ENCODE measurements at regions of chr20 and their contacts with region 1.

Region 1: DNA sequence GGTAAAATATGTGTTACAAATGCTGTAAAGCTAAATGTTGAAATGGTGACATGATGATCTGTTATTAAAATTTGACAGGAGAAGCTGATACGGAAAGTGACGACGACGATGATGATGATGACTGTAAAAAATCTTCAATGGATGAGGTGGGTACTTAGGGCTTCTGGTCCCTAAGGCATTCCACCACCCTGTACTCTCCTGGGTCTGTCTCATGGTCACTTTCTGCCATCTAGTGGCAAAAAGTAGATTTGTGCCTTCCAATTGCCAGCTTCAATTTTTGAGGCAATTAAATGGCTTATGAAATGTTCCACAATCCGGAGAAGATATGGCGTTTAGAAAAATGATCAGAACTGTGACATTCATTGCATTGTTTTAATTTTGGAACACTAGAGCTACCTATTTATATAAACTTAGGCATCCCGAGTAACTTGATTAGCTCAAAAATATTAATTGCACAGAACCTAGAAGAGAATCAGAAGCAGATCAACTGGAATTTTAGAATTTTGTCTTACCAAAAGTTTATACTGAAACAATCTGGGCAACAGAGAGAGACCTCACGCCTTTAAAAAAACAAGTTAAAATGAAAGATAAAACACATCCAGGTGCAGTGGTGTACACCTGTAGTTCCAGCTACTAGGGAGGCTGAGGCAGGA is 346.5 kb upstream of the PLCB4 start:
- DNase-seq: peak in 14 of 35 experiments; percentile 1 to 69 (median 9)
- ATAC-seq: peak in 2 of 4 experiments; percentile 48 to 57
- H3K4me3 ChIP-seq: no peak overlapping the region
- H3K4me3 Mint-ChIP-seq: no peak overlapping the region
- H3K27ac ChIP-seq: no peak overlapping the region
- H3K27ac Mint-ChIP-seq: no peak overlapping the region
- H3K4me1 ChIP-seq: no peaks in the 10 kb centered on the region
- H3K4me1 Mint-ChIP-seq: no peaks in the 10 kb centered on the region
- H3K27me3 ChIP-seq: no peaks in the 10 kb centered on the region
- H3K27me3 Mint-ChIP-seq: no peaks in the 10 kb centered on the region

Region 2: DNA sequence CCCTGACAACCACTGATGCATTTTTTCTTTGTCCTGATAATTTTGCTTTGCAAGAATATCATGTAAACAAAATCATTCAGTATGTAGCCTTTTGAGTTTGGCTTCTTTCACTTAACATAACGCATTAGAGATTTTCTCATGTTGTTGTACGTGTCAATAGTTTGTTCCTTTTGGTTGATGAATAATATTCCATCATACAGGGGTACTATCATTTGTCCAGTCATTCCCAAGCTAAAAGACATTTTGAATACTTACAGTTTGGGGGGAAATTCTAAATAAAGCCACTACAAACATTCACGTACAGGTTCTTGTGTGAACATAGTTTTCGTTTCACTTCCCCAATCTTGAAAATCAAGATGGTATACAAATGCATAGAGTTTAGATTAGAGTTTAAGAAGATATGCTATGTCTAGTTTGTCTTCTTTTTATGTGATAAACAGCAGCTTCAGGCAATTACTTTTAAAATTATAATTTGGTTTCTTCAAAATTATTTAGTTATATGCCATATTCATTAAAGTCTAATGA is 787.3 kb before region 1 on chr20:
- CTCF ChIA-PET with region 1: interaction called, 20 to 61 read pairs
- POLR2A ChIA-PET with region 1: no interaction called
- DNase-seq: no peak
- ATAC-seq: no peak
- H3K4me3 ChIP-seq: no peak overlapping the region
- H3K4me3 Mint-ChIP-seq: no peak overlapping the region
- H3K27ac ChIP-seq: no peak overlapping the region
- H3K27ac Mint-ChIP-seq: no peak overlapping the region
- H3K4me1 ChIP-seq: no peaks in the 10 kb centered on the region
- H3K4me1 Mint-ChIP-seq: no peaks in the 10 kb centered on the region
- H3K27me3 ChIP-seq: no peaks in the 10 kb centered on the region
- H3K27me3 Mint-ChIP-seq: peaks cover 10 to 20% of the 10 kb centered on the region in 2 donors

Region 3: GRCh38 chr20:8131598-8132483 is 590.6 kb before region 1 on chr20 and contains the start of gene PLCB1:
- CTCF ChIA-PET with region 1: interaction called, 4 to 17 read pairs
- POLR2A ChIA-PET with region 1: no interaction called
- DNase-seq: peak; percentile 60 to 90 (median 75)
- ATAC-seq: peak; percentile 85 to 92 (median 90)
- H3K4me3 ChIP-seq: peak within 1 kb of the TSS; percentile 64 to 69
- H3K4me3 Mint-ChIP-seq: peak within 1 kb of the TSS; percentile 78 to 83 (median 80)
- H3K27ac ChIP-seq: no peak within 1 kb of the TSS
- H3K27ac Mint-ChIP-seq: peak within 1 kb of the TSS in 1 of 2 donors; percentile 34
- H3K4me1 ChIP-seq: peaks cover 4 to 16% of the 10 kb centered on the region in 2 experiments
- H3K4me1 Mint-ChIP-seq: peaks cover 17 to 27% (median 21%) of the 10 kb centered on the region in 3 donors
- H3K27me3 ChIP-seq: peaks cover 0 to 13% of the 10 kb centered on the region in 2 experiments
- H3K27me3 Mint-ChIP-seq: peaks cover 6 to 31% of the 10 kb centered on the region in 2 donors
- total RNA-seq, gene PLCB1: 3.3 to 15.1 (median 7.4) TPM

Region 4: GRCh38 chr20:8473459-8473858 is 248.9 kb before region 1 on chr20:
- CTCF ChIA-PET with region 1: no interaction called
- POLR2A ChIA-PET with region 1: no interaction called
- DNase-seq: no peak
- ATAC-seq: no peak
- H3K4me3 ChIP-seq: no peak overlapping the region
- H3K4me3 Mint-ChIP-seq: no peak overlapping the region
- H3K27ac ChIP-seq: no peak overlapping the region
- H3K27ac Mint-ChIP-seq: no peak overlapping the region
- H3K4me1 ChIP-seq: no peaks in the 10 kb centered on the region
- H3K4me1 Mint-ChIP-seq: no peaks in the 10 kb centered on the region
- H3K27me3 ChIP-seq: no peaks in the 10 kb centered on the region
- H3K27me3 Mint-ChIP-seq: no peaks in the 10 kb centered on the region

Region 5: GRCh38 chr20:8815208-8815607 is 92.8 kb after region 1 on chr20:
- CTCF ChIA-PET with region 1: no interaction called
- POLR2A ChIA-PET with region 1: no interaction called
- DNase-seq: no peak
- ATAC-seq: no peak
- H3K4me3 ChIP-seq: no peak overlapping the region
- H3K4me3 Mint-ChIP-seq: no peak overlapping the region
- H3K27ac ChIP-seq: no peak overlapping the region
- H3K27ac Mint-ChIP-seq: no peak overlapping the region
- H3K4me1 ChIP-seq: no peaks in the 10 kb centered on the region
- H3K4me1 Mint-ChIP-seq: no peaks in the 10 kb centered on the region
- H3K27me3 ChIP-seq: no peaks in the 10 kb centered on the region
- H3K27me3 Mint-ChIP-seq: no peaks in the 10 kb centered on the region

Measured in T-cell (primary cell).